ENCODE measurements at regions of chr13 and their contacts with region 1.

Region 1: DNA sequence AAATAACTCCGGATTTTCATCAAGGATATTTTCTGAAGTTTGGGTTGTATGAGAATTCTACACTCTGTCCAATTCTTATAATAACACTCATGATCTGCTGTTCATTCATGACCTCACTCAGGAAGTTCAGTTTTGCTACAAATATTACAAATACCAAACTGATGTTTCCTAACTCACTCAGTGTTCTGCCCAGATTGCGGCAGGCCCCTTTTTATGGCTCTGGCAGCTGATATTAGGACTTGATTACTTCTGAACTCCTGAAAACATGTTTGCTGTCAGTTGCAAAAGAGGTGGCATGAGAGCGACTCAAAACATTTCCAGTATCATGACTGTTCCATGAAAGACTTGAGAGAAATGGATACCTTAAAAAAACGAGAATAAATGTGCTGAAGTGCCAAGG is 188.0 kb downstream of the RGCC start:
- DNase-seq: peak; percentile 62
- ATAC-seq: peak; percentile 44
- H3K4me3 ChIP-seq: no peak overlapping the region
- H3K27ac ChIP-seq: peak overlapping the region; percentile 27; the same call in 1 of the 2 replicates
- H3K4me1 ChIP-seq: peaks cover 44% of the 10 kb centered on the region
- H3K27me3 ChIP-seq: no peaks in the 10 kb centered on the region
- CTCF ChIP-seq: no peak

Region 2: DNA sequence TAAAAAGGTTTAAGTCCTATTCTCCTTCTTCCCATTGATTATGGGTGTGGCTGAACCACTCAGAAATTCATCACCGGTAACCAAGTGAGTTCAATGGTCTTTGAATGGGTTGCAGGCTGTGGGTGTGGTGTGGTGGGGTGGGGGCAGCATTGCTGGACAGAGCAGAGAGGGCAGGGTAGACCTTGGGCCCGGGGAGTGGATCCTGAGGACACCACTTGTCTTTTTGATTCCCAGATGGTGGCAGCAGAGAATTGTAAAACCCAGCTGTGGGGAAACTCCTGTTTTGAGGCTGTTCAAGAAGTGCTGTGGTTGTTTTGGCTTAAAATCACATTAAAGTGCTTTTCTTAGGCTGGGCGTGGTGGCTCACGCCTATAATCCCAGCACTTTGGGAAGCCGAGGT is 233.8 kb before region 1 on chr13:
- CTCF ChIA-PET with region 1: no interaction called
- POLR2A ChIA-PET with region 1: no interaction called
- intact Hi-C with region 1: loop called (anchors 1 kb)
- DNase-seq: peak; percentile 58
- ATAC-seq: peak; percentile 89
- H3K4me3 ChIP-seq: no peak overlapping the region
- H3K27ac ChIP-seq: no peak overlapping the region
- H3K4me1 ChIP-seq: no peaks in the 10 kb centered on the region
- H3K27me3 ChIP-seq: no peaks in the 10 kb centered on the region
- CTCF ChIP-seq: peak; percentile 60

Region 3: GRCh38 chr13:41443966-41444365 is 201.4 kb before region 1 on chr13:
- CTCF ChIA-PET with region 1: no interaction called
- POLR2A ChIA-PET with region 1: no interaction called
- intact Hi-C with region 1: no loop called
- DNase-seq: no peak
- ATAC-seq: no peak
- H3K4me3 ChIP-seq: no peak overlapping the region
- H3K27ac ChIP-seq: no peak overlapping the region
- H3K4me1 ChIP-seq: no peaks in the 10 kb centered on the region
- H3K27me3 ChIP-seq: no peaks in the 10 kb centered on the region
- CTCF ChIP-seq: no peak

Region 4: GRCh38 chr13:41973247-41973741 is 328.0 kb after region 1 on chr13:
- CTCF ChIA-PET with region 1: no interaction called
- POLR2A ChIA-PET with region 1: no interaction called
- intact Hi-C with region 1: no loop called
- DNase-seq: no peak
- ATAC-seq: no peak
- H3K4me3 ChIP-seq: no peak overlapping the region
- H3K27ac ChIP-seq: no peak overlapping the region
- H3K4me1 ChIP-seq: no peaks in the 10 kb centered on the region
- H3K27me3 ChIP-seq: no peaks in the 10 kb centered on the region
- CTCF ChIP-seq: no peak

Region 5: DNA sequence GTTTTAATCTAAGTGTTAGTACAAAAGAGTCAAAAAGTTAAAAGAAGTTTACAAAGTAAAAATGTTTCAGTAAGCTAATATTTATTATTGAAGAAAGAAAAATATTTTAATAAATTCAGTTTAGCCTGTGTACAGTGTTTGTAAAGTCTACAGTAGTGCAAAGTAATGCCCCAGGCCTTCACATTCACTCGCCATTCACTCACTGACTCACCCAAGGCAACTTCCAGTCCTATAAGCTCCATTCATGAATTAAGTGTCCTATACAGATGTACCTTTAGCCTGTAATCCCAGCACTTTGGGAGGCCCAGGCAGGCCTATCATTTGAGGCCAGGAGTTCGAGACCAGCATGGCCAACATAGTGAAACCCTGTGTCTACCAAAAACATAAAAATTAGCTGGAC is 602.6 kb after region 1 on chr13:
- CTCF ChIA-PET with region 1: no interaction called
- POLR2A ChIA-PET with region 1: interaction called, 21 read pairs
- intact Hi-C with region 1: no loop called
- DNase-seq: peak; percentile 34
- ATAC-seq: peak; percentile 73
- H3K4me3 ChIP-seq: no peak overlapping the region
- H3K27ac ChIP-seq: no peak overlapping the region
- H3K4me1 ChIP-seq: no peaks in the 10 kb centered on the region
- H3K27me3 ChIP-seq: no peaks in the 10 kb centered on the region
- CTCF ChIP-seq: no peak